Left ventricle myocardium inferior (tissue), 1 donor: ENCODE measurements at regions of chr1 and their contacts with region 1.

Region 1: GRCh38 chr1:1959840-1960479 is 40.9 kb upstream of the TMEM52 start:
- DNase-seq: peak; percentile 86
- H3K4me3 ChIP-seq: peak overlapping the region; percentile 45
- H3K27ac ChIP-seq: no peak overlapping the region
- H3K4me1 ChIP-seq: peaks cover 13% of the 10 kb centered on the region
- H3K27me3 ChIP-seq: peaks cover 91% of the 10 kb centered on the region
- CTCF ChIP-seq: peak; percentile 88

Region 2: GRCh38 chr1:2044510-2045319 is 84.8 kb after region 1 on chr1:
- intact Hi-C with region 1: loop called (anchors 10 kb)
- DNase-seq: peak; percentile 72
- H3K4me3 ChIP-seq: peak overlapping the region; percentile 53
- H3K27ac ChIP-seq: no peak overlapping the region
- H3K4me1 ChIP-seq: peaks cover 28% of the 10 kb centered on the region
- H3K27me3 ChIP-seq: peaks cover 61% of the 10 kb centered on the region
- CTCF ChIP-seq: peak; percentile 89